Tibial artery (tissue), 4 donors: ENCODE measurements at regions of chr22 and their contacts with region 1.

Region 1: GRCh38 chr22:16922076-16922475 is 85.9 kb downstream of the GAB4 start:
- DNase-seq: no peak
- H3K4me3 ChIP-seq: no peak overlapping the region
- H3K27ac ChIP-seq: no peak overlapping the region
- H3K4me1 ChIP-seq: peaks cover 0 to 3% (median 0%) of the 10 kb centered on the region in 4 donors
- H3K27me3 ChIP-seq: peaks cover 0 to 18% of the 10 kb centered on the region in 2 donors
- CTCF ChIP-seq: no peak

Region 2: GRCh38 chr22:16989915-16990314 is 67.8 kb after region 1 on chr22:
- intact Hi-C with region 1: no loop called
- DNase-seq: no peak
- H3K4me3 ChIP-seq: no peak overlapping the region
- H3K27ac ChIP-seq: no peak overlapping the region
- H3K4me1 ChIP-seq: no peaks in the 10 kb centered on the region
- H3K27me3 ChIP-seq: no peaks in the 10 kb centered on the region
- CTCF ChIP-seq: no peak

Region 3: GRCh38 chr22:17057959-17058814 is 136.1 kb after region 1 on chr22:
- intact Hi-C with region 1: loop called (anchors 10 kb)
- DNase-seq: peak; percentile 70 to 71
- H3K4me3 ChIP-seq: no peak overlapping the region
- H3K27ac ChIP-seq: no peak overlapping the region
- H3K4me1 ChIP-seq: peaks cover 0 to 3% (median 0%) of the 10 kb centered on the region in 4 donors
- H3K27me3 ChIP-seq: peaks cover 0 to 30% of the 10 kb centered on the region in 2 donors
- CTCF ChIP-seq: peak; percentile 59 to 82

Region 4: GRCh38 chr22:17234144-17234623 is 312.1 kb after region 1 on chr22:
- intact Hi-C with region 1: no loop called
- DNase-seq: no peak
- H3K4me3 ChIP-seq: no peak overlapping the region
- H3K27ac ChIP-seq: no peak overlapping the region
- H3K4me1 ChIP-seq: no peaks in the 10 kb centered on the region
- H3K27me3 ChIP-seq: peaks cover 0 to 24% of the 10 kb centered on the region in 2 donors
- CTCF ChIP-seq: no peak